A549 (cell line): ENCODE measurements at regions of chr19 and their contacts with region 1.

Region 1: DNA sequence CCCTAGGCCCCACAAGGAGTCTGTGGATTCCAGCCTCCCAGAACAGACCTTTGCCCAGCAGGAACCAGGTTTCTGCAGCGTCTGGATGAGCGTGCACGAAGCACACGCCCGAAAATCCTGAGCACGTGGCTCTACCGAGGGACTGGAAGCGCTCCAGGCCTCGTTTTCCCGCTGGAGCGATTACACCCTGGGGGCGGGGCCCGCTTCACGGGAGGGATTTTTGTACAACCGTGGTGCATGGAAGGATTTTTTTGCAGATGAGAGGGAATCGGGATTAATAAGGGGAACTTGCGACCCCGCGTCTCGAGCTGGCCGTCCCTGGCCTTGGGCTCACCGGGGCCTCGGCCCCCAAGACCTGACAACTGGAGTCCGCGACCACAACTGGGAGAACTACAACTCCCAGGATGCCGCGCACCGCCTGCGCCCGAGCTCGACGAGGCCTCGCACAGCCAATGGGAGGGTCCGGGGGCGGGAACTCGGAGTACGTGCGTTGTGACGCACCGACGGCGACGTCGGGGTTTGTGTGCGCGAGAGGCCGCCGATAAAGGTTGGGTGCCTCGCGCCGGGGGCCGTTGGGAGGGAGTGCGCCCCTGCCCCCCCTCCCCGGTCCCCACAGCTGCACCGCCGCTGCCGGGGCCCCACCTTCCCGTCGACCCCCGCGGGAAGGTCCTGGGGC is at the start of gene ZNF628:
- DNase-seq: peak; percentile 99 to 100
- ATAC-seq: peak; percentile 94
- H3K4me3 ChIP-seq: peak within 1 kb of the TSS; percentile 56
- H3K27ac ChIP-seq: peak within 1 kb of the TSS; percentile 84 to 92
- H3K4me1 ChIP-seq: peaks cover 26% of the 10 kb centered on the region
- CTCF ChIP-seq: no peak
- EP300 ChIP-seq: no peak
- POLR2A ChIP-seq: peak; percentile 26; the same call in 1 of the 2 replicates
- RAD21 ChIP-seq: no peak
- polyA plus RNA-seq, gene ZNF628: 0.32 and 0.48 TPM in 2 replicates

Region 2: DNA sequence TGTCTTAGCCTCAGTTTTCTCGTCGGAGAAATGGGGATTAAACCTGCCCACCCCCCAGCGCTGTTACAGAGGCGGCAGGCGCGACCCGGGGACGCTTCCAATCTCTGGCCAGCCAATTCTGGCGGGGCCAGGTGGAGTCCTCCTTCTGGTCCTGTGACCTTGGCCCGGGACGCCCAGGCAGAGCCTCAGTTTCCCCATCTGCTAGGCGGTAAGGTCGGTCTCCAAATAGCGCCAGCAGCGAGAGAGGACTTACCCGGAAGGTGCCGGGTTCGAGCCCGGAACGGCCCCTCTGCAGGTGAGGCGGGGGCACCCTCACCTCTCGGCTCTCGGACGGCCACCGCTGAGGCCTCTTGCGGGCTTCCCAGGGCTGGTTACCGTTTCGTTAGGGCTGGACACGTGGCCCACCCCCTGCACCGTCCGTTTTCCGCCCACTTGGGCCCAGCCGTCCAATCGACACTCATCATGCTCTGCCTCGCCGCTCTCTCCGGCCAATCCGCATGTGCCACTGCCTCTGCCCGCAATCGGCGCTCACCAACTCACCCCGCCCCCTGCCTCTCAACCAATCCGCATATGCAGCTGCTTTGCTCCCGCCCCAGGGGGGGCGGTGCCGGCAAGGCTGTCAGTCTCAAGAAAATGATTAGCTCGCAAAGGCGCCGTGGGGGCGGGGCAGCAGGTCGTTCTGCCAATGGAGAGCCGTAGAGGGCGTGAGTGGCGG is 14.8 kb before region 1 on chr19 and contains the start of gene ISOC2:
- CTCF ChIA-PET with region 1: interaction called, 89 read pairs
- POLR2A ChIA-PET with region 1: interaction called, 22 read pairs
- DNase-seq: peak; percentile 100
- ATAC-seq: peak; percentile 93 to 98
- H3K4me3 ChIP-seq: peak within 1 kb of the TSS; percentile 85
- H3K27ac ChIP-seq: peak within 1 kb of the TSS; percentile 83 to 90
- H3K4me1 ChIP-seq: peaks cover 14% of the 10 kb centered on the region; the same call in 2 of the 3 replicates
- CTCF ChIP-seq: no peak
- EP300 ChIP-seq: no peak
- POLR2A ChIP-seq: peak; percentile 77
- RAD21 ChIP-seq: no peak
- polyA plus RNA-seq, gene ISOC2: 45.3 and 51.5 TPM in 2 replicates